K562 (cell line): ENCODE measurements at regions of chr1 and their contacts with region 1.

Region 1: GRCh38 chr1:202154766-202155477 is 5.5 kb downstream of the PTPN7 start:
- DNase-seq: peak; percentile 60 to 84 (median 66)
- ATAC-seq: peak; percentile 77
- H3K4me3 ChIP-seq: no peak overlapping the region
- H3K27ac ChIP-seq: peak overlapping the region; percentile 27; the same call in 2 of the 3 replicates
- H3K4me1 ChIP-seq: peaks cover 39 to 61% of the 10 kb centered on the region in 2 experiments
- H3K27me3 ChIP-seq: no peaks in the 10 kb centered on the region
- CTCF ChIP-seq: peak; percentile 85 to 88 (median 87)
- EP300 ChIP-seq: no peak
- POLR2A ChIP-seq: no peak
- RAD21 ChIP-seq: peak; percentile 51 to 77; a peak in 3 of 4 replicates

Region 2: DNA sequence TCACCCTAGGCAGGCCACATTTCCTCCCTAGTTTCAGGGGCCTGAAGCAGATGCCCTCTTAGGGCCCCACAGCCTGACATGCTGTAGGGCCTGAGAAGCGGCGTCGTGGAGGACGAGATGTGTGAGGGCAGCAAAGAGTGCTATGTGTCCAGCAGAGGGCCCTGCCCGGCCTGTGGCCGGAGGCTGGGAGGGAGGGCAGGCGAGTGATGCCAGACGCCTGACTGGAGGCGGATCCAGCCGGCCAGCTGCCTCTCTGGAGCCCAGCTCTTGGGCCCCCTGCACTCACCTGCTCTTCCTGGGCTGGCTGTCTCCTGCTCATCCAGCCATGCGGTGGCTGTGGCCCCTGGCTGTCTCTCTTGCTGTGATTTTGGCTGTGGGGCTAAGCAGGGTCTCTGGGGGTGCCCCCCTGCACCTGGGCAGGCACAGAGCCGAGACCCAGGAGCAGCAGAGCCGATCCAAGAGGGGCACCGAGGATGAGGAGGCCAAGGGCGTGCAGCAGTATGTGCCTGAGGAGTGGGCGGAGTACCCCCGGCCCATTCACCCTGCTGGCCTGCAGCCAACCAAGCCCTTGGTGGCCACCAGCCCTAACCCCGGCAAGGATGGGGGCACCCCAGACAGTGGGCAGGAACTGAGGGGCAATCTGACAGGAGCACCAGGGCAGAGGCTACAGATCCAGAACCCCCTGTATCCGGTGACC is 32.1 kb before region 1 on chr1 and contains the start of gene GPR37L1:
- CTCF ChIA-PET with region 1: no interaction called
- POLR2A ChIA-PET with region 1: no interaction called
- in situ Hi-C with region 1: no loop called
- intact Hi-C with region 1: no loop called
- DNase-seq: peak; percentile 62 to 72 (median 66)
- ATAC-seq: peak; percentile 80
- H3K4me3 ChIP-seq: no peak within 1 kb of the TSS
- H3K27ac ChIP-seq: no peak within 1 kb of the TSS
- H3K4me1 ChIP-seq: peaks cover 9 to 17% of the 10 kb centered on the region in 2 experiments; a peak in 4 of 5 replicates
- H3K27me3 ChIP-seq: peaks cover 38 to 67% of the 10 kb centered on the region in 2 experiments
- CTCF ChIP-seq: peak; percentile 67 to 76 (median 70)
- EP300 ChIP-seq: no peak
- POLR2A ChIP-seq: no peak
- RAD21 ChIP-seq: peak; percentile 21 to 63; a peak in 3 of 4 replicates
- polyA plus RNA-seq, gene GPR37L1: not detected

Region 3: DNA sequence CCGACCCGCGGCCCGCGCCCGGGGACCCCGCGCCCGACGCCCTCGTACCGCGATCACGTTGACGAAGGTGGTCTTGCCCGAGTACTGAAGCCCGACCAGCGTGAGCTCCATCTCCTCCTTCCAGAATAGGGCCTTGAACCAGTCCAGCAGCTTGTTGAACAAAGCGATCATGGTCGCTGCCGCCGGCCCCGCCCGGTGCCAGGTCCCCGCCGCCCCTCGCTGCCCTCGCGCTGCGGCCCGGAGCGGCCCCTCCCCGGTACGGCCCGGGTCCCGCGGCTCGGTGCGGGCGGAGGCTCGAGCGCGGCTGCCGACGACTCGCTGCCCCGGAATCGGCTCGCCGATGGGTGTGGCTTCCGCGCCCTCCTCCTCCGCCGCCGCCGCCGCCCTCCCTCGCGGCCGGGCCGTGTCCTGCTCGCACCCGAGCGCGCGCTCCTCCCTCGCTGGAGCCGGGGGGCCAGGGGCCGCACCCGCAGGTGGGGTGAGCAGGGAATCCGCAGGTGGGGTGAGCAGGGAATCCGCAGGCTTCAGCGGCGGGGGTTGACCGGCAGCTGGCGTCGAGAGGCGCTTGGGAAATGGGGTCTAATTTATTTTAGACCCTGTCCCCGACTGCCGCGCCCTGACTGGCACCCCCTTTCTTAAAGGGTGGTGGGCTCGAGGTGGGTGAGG is 10.4 kb before region 1 on chr1 and contains the start of gene ARL8A:
- CTCF ChIA-PET with region 1: no interaction called
- POLR2A ChIA-PET with region 1: interaction called, 49 read pairs
- in situ Hi-C with region 1: no loop called
- intact Hi-C with region 1: no loop called
- DNase-seq: peak; percentile 81 to 92 (median 91)
- ATAC-seq: peak; percentile 86
- H3K4me3 ChIP-seq: peak within 1 kb of the TSS; percentile 80
- H3K27ac ChIP-seq: peak within 1 kb of the TSS; percentile 73
- H3K4me1 ChIP-seq: peaks cover 19 to 31% of the 10 kb centered on the region in 2 experiments; a peak in 4 of 5 replicates
- H3K27me3 ChIP-seq: no peaks in the 10 kb centered on the region
- CTCF ChIP-seq: no peak
- EP300 ChIP-seq: no peak
- POLR2A ChIP-seq: peak; percentile 54
- RAD21 ChIP-seq: no peak; a peak in 1 of 4 replicates
- polyA plus RNA-seq, gene ARL8A: 0.17 to 0.32 TPM

Region 4: GRCh38 chr1:202184750-202185460 is 30.0 kb after region 1 on chr1:
- CTCF ChIA-PET with region 1: no interaction called
- POLR2A ChIA-PET with region 1: interaction called, 4 read pairs
- in situ Hi-C with region 1: no loop called
- intact Hi-C with region 1: loop called (anchors 1 kb)
- DNase-seq: peak; percentile 86 to 92 (median 90)
- ATAC-seq: peak; percentile 87
- H3K4me3 ChIP-seq: no peak overlapping the region
- H3K27ac ChIP-seq: no peak overlapping the region
- H3K4me1 ChIP-seq: peaks cover 0 to 18% of the 10 kb centered on the region in 2 experiments; a peak in 3 of 5 replicates
- H3K27me3 ChIP-seq: no peaks in the 10 kb centered on the region; a peak in 1 of 5 replicates
- CTCF ChIP-seq: peak; percentile 96
- EP300 ChIP-seq: no peak
- POLR2A ChIP-seq: no peak
- RAD21 ChIP-seq: peak in 1 of 2 experiments; percentile 55; a peak in 3 of 4 replicates

Region 5: GRCh38 chr1:202810615-202811295 is 655.8 kb after region 1 on chr1 and contains the start of gene PCAT6:
- CTCF ChIA-PET with region 1: no interaction called
- POLR2A ChIA-PET with region 1: no interaction called
- in situ Hi-C with region 1: no loop called
- intact Hi-C with region 1: loop called (anchors 10 kb)
- DNase-seq: peak; percentile 96 to 98 (median 97)
- ATAC-seq: peak; percentile 82
- H3K4me3 ChIP-seq: peak within 1 kb of the TSS; percentile 54
- H3K27ac ChIP-seq: peak within 1 kb of the TSS; percentile 54
- H3K4me1 ChIP-seq: peaks cover 27 to 32% of the 10 kb centered on the region in 2 experiments
- H3K27me3 ChIP-seq: no peaks in the 10 kb centered on the region; a peak in 1 of 5 replicates
- CTCF ChIP-seq: no peak
- EP300 ChIP-seq: peak; percentile 61
- POLR2A ChIP-seq: peak; percentile 86
- RAD21 ChIP-seq: 0 out of 4 replicates have a peak, but pooled peaks have one; percentile 8
- polyA plus RNA-seq, gene PCAT6: 0.35 to 0.42 TPM